ENCODE measurements at regions of chr17 and their contacts with region 1.

Region 1: GRCh38 chr17:28726226-28727130 is at the start of gene TLCD1:
- DNase-seq: peak; percentile 82 to 98
- H3K4me3 ChIP-seq: peak within 1 kb of the TSS; percentile 57
- H3K4me3 Mint-ChIP-seq: peak within 1 kb of the TSS; percentile 92
- H3K27ac Mint-ChIP-seq: peak within 1 kb of the TSS; percentile 96
- H3K4me1 ChIP-seq: peaks cover 23% of the 10 kb centered on the region
- H3K4me1 Mint-ChIP-seq: peaks cover 38% of the 10 kb centered on the region
- H3K27me3 ChIP-seq: no peaks in the 10 kb centered on the region
- H3K27me3 Mint-ChIP-seq: no peaks in the 10 kb centered on the region
- CTCF ChIP-seq: peak; percentile 98 to 99
- total RNA-seq, gene TLCD1: 31.7 and 37.9 TPM in 2 replicates

Region 2: DNA sequence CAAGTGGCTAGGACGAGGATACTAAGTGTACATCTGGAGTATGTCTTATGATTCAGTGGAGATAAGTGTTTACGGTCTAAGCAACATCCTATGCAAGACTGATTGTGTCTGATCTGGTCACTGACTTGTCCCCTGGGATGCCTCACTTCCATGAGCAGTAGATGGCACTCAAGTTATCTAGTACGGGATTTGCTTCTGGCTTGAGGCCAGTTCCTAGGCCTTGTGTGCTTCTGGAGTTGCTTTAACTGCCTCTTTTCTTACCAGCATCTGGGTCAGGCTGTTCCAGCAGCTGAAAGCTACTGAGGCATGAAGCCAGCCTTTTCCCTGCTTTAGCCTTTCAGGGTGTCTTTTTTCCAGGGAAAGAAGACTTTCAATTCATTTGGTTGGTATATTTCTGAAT is 41.5 kb before region 1 on chr17:
- CTCF ChIA-PET with region 1: interaction called, 3 read pairs
- POLR2A ChIA-PET with region 1: no interaction called
- intact Hi-C with region 1: loop called (anchors 2 kb)
- DNase-seq: peak in 1 of 2 experiments; percentile 57
- H3K4me3 ChIP-seq: no peak overlapping the region
- H3K4me3 Mint-ChIP-seq: no peak overlapping the region
- H3K27ac Mint-ChIP-seq: no peak overlapping the region
- H3K4me1 ChIP-seq: no peaks in the 10 kb centered on the region
- H3K4me1 Mint-ChIP-seq: no peaks in the 10 kb centered on the region
- H3K27me3 ChIP-seq: no peaks in the 10 kb centered on the region
- H3K27me3 Mint-ChIP-seq: no peaks in the 10 kb centered on the region
- CTCF ChIP-seq: peak in 1 of 2 experiments; percentile 42

Region 3: DNA sequence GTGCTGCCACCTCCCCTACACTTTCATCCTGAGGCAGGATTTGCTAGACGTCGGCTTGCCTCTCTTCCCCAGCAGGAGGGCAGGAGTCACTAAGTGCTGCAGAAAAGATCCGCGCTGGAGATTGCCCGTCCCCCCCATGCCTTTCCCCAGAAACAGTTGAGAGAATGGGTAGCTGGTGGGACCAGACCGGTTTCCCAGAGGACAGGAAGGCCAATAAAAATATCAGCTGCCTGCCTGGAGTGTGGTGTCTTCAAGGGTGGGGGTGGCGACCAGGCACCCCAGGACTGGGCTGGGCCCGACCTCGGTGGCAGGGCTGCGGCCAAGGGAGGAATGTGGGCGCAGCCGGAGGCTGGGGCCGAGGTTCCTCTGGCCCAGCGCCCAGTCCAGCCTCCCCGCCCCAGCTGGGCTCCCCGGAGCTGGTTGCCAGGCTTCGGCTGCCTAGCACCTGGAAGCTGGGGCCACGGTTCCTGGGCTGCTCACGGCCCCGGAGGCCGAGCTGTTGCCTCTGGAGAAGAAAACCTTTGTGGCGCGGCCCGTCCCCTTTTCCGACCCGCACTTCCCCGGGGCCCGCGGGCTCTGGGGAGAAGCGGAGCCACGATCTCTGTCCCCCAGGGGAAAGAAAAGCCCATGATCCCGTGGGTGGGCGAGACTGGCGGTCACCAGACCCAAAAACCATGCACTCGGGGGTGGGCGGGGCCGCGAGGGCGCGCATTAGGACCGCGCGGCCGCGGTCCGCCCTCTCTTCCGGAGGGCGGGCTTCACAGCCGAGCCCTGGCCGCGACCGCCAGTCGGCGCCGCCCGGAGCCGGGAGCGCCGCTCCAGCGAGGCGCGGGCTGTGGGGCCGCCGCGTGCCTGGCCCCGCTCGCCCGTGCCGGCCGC is 17.0 kb after region 1 on chr17 and contains the start of gene TRAF4:
- CTCF ChIA-PET with region 1: interaction called, 324 read pairs
- POLR2A ChIA-PET with region 1: interaction called, 165 read pairs
- intact Hi-C with region 1: loop called (anchors 1 kb)
- DNase-seq: peak; percentile 83 to 91
- H3K4me3 ChIP-seq: peak within 1 kb of the TSS; percentile 68
- H3K4me3 Mint-ChIP-seq: peak within 1 kb of the TSS; percentile 95
- H3K27ac Mint-ChIP-seq: peak within 1 kb of the TSS; percentile 96
- H3K4me1 ChIP-seq: peaks cover 40% of the 10 kb centered on the region
- H3K4me1 Mint-ChIP-seq: peaks cover 12% of the 10 kb centered on the region
- H3K27me3 ChIP-seq: no peaks in the 10 kb centered on the region
- H3K27me3 Mint-ChIP-seq: no peaks in the 10 kb centered on the region
- CTCF ChIP-seq: peak in 1 of 2 experiments; percentile 18
- total RNA-seq, gene TRAF4: 140 and 154 TPM in 2 replicates

Region 4: DNA sequence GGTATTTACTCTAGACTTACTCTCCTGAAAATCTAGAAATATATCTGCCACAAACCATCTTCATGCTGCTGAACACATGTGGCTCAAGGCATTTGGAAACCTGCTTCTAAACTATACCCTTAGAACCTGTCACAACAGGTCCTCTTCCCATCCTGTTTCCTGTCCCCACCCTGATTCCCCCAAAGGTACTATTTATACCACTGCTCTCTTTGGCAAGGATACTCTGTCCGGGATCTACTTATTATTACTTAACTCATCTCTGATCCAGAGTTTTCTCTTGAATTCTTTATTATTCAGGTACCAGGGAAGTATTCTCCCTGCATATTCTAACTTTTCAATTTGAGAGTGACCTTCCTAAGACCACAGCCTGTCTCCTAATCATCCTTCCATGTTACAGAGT is 50.7 kb after region 1 on chr17:
- CTCF ChIA-PET with region 1: no interaction called
- POLR2A ChIA-PET with region 1: no interaction called
- intact Hi-C with region 1: no loop called
- DNase-seq: no peak
- H3K4me3 ChIP-seq: no peak overlapping the region
- H3K4me3 Mint-ChIP-seq: no peak overlapping the region
- H3K27ac Mint-ChIP-seq: no peak overlapping the region
- H3K4me1 ChIP-seq: no peaks in the 10 kb centered on the region
- H3K4me1 Mint-ChIP-seq: no peaks in the 10 kb centered on the region
- H3K27me3 ChIP-seq: no peaks in the 10 kb centered on the region
- H3K27me3 Mint-ChIP-seq: no peaks in the 10 kb centered on the region
- CTCF ChIP-seq: no peak

Region 5: GRCh38 chr17:28842282-28843012 is 116.0 kb after region 1 on chr17 and contains the start of gene FAM222B:
- CTCF ChIA-PET with region 1: interaction called, 6 read pairs
- POLR2A ChIA-PET with region 1: interaction called, 4 read pairs
- intact Hi-C with region 1: loop called (anchors 1 kb)
- DNase-seq: peak; percentile 90 to 94
- H3K4me3 ChIP-seq: peak within 1 kb of the TSS; percentile 84
- H3K4me3 Mint-ChIP-seq: peak within 1 kb of the TSS; percentile 98
- H3K27ac Mint-ChIP-seq: peak within 1 kb of the TSS; percentile 82
- H3K4me1 ChIP-seq: peaks cover 8% of the 10 kb centered on the region
- H3K4me1 Mint-ChIP-seq: no peaks in the 10 kb centered on the region
- H3K27me3 ChIP-seq: no peaks in the 10 kb centered on the region
- H3K27me3 Mint-ChIP-seq: no peaks in the 10 kb centered on the region
- CTCF ChIP-seq: peak in 1 of 2 experiments; percentile 6
- total RNA-seq, gene FAM222B: 37.6 and 39.5 TPM in 2 replicates

Region 6: DNA sequence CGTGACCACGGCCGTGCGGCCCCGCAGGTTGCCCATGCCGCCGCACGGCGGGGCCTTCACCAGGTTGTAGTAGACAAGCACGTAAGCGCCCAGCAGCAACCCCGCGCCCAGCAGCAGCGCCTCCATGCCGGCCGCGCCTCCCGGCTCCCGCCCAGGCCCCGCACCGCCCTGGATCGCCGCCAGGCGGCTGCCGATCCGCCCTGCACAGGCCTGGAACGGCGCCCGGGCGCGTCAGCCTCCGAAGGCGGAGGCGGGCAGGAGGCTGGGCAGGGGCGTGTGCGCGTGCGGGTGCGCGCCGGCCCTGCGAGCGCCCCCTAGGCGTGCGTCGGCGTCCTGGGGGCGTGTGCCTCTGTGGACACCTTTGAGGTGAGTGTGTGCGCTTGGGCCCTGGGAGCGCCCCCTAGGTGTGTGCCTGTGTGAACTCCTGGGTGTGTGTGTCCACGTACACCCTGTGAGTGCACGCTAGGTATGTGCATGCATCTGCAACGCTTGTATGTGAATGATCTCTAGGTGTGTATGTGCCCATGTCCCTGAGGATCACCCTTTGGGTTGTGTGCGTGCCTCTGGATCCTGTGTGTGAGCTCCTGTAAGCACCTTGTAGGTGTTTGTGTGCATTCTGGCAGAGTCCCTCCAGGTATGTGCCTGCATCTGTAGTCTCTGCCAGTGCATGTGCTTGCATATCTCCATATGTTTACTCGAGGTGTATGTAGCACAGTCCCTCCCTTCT is 176.5 kb after region 1 on chr17 and contains the start of gene DHRS13:
- CTCF ChIA-PET with region 1: interaction called, 15 read pairs
- POLR2A ChIA-PET with region 1: interaction called, 3 read pairs
- intact Hi-C with region 1: no loop called
- DNase-seq: peak; percentile 95 to 99
- H3K4me3 ChIP-seq: peak within 1 kb of the TSS; percentile 72
- H3K4me3 Mint-ChIP-seq: peak within 1 kb of the TSS; percentile 81
- H3K27ac Mint-ChIP-seq: peak within 1 kb of the TSS; percentile 76
- H3K4me1 ChIP-seq: peaks cover 11% of the 10 kb centered on the region
- H3K4me1 Mint-ChIP-seq: peaks cover 24% of the 10 kb centered on the region
- H3K27me3 ChIP-seq: no peaks in the 10 kb centered on the region
- H3K27me3 Mint-ChIP-seq: no peaks in the 10 kb centered on the region
- CTCF ChIP-seq: peak; percentile 97 to 98
- total RNA-seq, gene DHRS13: 32.8 and 38.0 TPM in 2 replicates

Measured in Caco-2 (cell line).